HEK293 (cell line): ENCODE measurements at regions of chr15 and their contacts with region 1.

Region 1: DNA sequence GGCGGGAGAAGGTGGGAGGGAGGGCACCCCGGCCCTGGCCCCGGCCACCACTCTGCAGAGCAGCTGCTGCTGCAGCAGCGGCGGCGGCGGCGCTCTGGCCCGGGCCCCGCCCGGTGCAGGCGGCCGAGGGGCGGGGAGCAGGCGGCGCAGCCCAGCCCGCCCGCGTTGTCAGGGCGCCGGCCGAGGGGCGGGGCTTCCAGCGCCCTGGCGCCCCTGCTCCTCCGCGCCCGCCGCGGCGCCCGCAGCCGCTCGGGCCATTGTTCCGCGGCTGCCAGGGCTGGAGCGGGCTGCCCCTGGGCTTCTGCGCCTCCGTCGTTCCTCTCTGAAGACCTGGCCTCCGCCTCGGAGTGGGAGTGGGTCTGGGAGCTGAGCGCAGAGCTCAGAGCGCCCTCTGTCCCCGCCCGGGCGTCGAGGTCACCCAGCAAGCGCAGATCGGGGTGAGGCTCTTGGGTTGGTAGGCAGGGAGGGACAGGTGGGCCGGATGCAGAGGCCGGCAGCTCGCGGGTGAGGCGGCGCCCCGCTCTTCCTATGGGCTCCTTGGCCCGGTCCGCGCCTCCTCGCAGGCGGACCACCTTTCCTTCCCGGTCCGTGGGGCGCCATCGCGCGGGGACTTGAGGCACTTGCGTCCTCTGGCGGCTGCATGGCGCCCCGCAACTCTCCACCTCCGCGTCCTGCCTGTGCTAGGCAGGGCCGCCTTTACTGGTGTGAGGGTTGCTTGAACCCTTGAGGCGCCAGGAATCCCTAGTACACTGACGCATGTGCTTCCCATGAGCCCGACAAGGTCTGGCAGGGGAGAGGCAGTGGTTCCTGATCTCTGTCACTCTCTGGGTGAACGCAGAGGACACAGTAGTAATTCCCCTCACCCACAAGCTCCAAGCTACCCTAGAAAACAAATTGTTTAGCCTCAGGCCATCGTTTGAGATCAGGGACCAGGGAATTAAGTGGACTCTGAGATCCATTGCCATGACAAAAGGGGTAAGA is at the start of gene LPCAT4:
- H3K4me3 ChIP-seq: peak within 1 kb of the TSS; percentile 69
- H3K27ac ChIP-seq: peak within 1 kb of the TSS; percentile 92
- H3K4me1 ChIP-seq: no peaks in the 10 kb centered on the region; the same call in 1 of the 2 replicates
- CTCF ChIP-seq: peak; percentile 99

Region 2: DNA sequence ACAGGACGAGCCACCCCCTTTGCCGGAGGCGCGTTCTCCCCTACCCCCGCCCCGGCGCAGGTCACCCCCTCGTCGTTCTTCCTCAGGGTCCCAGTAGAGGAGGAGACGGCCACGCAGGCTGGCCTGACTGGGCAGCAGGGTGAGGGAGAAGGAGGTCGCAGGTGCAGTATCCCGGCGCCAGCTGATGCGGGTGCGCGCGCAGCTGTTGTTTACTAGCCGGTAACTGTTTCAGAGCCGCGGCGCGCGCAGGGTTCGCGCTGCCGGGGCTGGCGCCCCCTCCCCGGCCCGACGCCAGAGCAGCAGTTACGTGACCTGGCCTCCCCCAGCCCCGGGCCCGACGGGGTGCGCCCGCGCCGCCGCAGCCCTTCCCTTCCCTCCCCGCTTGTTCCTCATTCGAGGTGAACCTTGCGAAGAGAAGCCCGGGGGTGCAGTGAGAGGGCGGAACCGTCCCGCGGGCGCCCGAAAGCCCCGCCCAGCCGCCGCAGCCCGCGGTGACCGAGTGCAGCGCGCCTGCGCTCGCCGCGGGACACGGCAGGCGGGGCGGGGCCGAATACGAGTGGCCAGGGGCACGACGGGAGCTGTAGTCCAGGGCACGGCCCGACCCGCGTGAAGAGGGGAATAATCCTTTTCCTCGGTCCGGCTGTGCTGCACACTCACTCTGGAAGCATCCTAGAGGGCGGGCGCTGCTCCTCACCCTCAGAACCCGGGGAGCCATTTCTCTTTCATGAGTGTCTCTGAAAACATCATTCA is 29.7 kb before region 1 on chr15 and contains the start of gene SLC12A6:
- CTCF ChIA-PET with region 1: interaction called, 15 read pairs
- POLR2A ChIA-PET with region 1: interaction called, 14 read pairs
- H3K4me3 ChIP-seq: peak within 1 kb of the TSS; percentile 90
- H3K27ac ChIP-seq: peak within 1 kb of the TSS; percentile 51; the same call in 1 of the 2 replicates
- H3K4me1 ChIP-seq: no peaks in the 10 kb centered on the region
- CTCF ChIP-seq: no peak

Region 3: DNA sequence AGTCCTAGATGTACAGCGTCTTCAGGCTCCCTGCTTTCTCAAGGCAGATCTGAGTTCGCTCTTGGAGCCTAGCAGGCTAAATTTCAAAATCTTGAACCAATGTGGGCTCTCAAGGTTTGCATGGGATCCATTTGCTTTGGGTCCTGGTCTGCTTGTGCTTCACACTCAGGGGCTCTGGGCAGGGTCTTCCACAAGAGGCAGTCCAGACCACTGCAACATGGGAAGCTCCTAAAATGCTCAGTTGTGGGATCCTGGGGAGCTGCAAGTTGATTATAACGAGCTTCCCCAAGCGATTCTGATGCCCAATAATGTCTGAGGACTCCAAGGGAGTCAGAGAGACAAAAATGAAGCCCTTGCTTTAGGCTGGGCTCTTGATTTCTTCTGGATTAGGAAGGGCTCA is 17.6 kb before region 1 on chr15:
- CTCF ChIA-PET with region 1: no interaction called
- POLR2A ChIA-PET with region 1: no interaction called
- H3K4me3 ChIP-seq: no peak overlapping the region
- H3K27ac ChIP-seq: no peak overlapping the region
- H3K4me1 ChIP-seq: no peaks in the 10 kb centered on the region
- CTCF ChIP-seq: no peak